IMR-90 (cell line): ENCODE measurements at regions of chr15 and their contacts with region 1.

Region 1: DNA sequence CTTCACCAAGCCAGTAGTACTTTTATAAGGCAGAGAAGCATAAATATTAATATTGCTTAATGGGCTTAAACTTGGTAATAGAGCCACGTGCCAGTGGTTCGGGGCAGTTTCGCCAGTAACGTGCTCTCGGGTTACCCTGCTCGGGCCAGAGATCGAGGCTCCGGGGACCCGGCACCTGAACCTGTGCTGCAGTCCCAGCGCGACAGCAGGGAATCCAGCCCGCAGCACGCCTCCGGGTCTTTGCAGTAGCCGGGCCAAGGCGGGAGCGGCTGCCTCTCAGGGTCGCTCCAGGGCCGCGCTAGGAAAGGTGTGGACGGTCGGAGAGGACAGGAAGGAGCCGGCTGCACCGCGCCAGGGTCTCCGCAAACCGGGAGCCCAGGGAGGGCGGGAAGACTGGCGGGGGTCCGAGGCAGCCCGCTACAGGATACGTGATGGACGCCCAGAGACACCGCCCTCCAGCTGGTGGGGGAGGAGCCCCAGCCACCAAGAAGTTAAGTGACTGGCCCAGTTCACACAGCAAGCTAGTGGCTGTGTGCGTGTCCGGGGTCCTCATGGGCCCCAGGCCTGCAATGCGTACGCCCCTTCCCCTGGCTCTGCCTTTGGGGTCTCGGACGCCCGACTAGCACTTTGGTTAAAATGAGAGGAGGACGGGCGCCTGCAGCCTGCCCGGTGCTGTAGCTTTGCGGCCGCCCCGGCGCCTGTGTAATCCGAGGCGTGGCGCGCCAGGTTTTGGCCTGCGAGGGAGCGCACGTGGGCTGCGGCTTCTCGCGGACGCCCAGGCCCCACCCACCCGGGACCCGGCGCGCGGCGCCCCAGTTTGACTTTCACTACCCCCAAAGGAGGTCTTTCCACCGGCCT is 1.2 kb upstream of the PDE8A start:
- DNase-seq: peak; percentile 74
- ATAC-seq: peak; percentile 69
- H3K4me3 ChIP-seq: peak overlapping the region; percentile 88
- H3K27ac ChIP-seq: peak overlapping the region; percentile 82
- H3K4me1 ChIP-seq: peaks cover 3% of the 10 kb centered on the region
- H3K27me3 ChIP-seq: no peaks in the 10 kb centered on the region
- CTCF ChIP-seq: no peak
- POLR2A ChIP-seq: peak; percentile 81
- RAD21 ChIP-seq: no peak

Region 2: GRCh38 chr15:84818261-84819131 is 161.9 kb before region 1 on chr15:
- CTCF ChIA-PET with region 1: no interaction called
- POLR2A ChIA-PET with region 1: no interaction called
- dilution Hi-C with region 1: no loop called
- in situ Hi-C with region 1: no loop called
- intact Hi-C with region 1: no loop called
- DNase-seq: peak; percentile 14
- ATAC-seq: no peak
- H3K4me3 ChIP-seq: no peak overlapping the region
- H3K27ac ChIP-seq: no peak overlapping the region
- H3K4me1 ChIP-seq: no peaks in the 10 kb centered on the region
- H3K27me3 ChIP-seq: peaks cover 8% of the 10 kb centered on the region; the same call in 1 of the 2 replicates
- CTCF ChIP-seq: no peak
- POLR2A ChIP-seq: no peak
- RAD21 ChIP-seq: no peak

Region 3: DNA sequence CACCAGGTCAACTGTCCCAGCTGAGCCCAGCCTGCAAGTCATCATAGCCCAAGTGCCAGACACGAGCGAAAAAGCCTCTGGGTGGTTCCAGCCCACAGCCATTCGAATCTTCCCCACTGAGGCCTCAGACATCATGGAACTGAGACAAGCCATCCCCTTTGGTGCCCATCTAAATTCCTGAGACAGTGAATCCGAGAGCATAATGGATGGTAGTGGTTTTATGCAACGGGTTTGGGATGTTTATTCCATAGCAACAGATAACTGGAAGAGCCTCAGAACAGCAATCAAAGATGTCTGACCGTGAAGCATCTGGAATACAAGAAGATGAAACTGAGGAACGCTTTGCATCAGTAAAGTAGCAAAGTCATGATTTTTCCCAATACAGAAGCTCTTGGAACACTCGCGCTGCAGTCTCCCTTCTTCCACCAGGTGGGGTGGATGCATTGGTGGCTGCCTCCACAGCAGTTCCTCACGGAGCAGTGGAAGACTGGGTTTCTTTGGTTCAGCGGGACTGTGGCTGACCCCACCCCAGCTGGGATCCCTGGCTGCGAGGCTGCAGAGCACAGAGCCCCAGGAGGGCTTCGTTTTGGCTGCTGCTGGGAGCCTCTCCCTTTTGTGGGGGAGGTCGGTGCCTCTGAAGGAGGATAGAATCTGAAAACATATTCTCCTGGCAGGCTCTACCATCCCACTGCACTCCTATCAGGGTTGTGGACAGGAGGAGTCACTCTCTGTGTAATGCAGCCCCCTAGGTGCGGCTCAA is 25.2 kb before region 1 on chr15:
- CTCF ChIA-PET with region 1: no interaction called
- POLR2A ChIA-PET with region 1: no interaction called
- dilution Hi-C with region 1: no loop called
- in situ Hi-C with region 1: no loop called
- intact Hi-C with region 1: loop called (anchors 1 kb)
- DNase-seq: peak; percentile 78
- ATAC-seq: peak; percentile 98
- H3K4me3 ChIP-seq: no peak overlapping the region
- H3K27ac ChIP-seq: no peak overlapping the region
- H3K4me1 ChIP-seq: peaks cover 6% of the 10 kb centered on the region
- H3K27me3 ChIP-seq: no peaks in the 10 kb centered on the region
- CTCF ChIP-seq: peak; percentile 87
- POLR2A ChIP-seq: peak; percentile 50; the same call in 1 of the 2 replicates
- RAD21 ChIP-seq: peak; percentile 90